ENCODE measurements at regions of chr1 and their contacts with region 1.

Region 1: GRCh38 chr1:8941906-8942305 is 3.8 kb upstream of the CA6 start:
- DNase-seq: no peak
- H3K4me3 Mint-ChIP-seq: peak overlapping the region; percentile 7
- H3K27ac Mint-ChIP-seq: peak overlapping the region; percentile 84
- H3K4me1 Mint-ChIP-seq: peaks cover 92% of the 10 kb centered on the region
- H3K27me3 Mint-ChIP-seq: no peaks in the 10 kb centered on the region

Region 2: GRCh38 chr1:8604041-8604945 is 337.6 kb before region 1 on chr1:
- intact Hi-C with region 1: loop called (anchors 5 kb)
- DNase-seq: peak; percentile 34
- H3K4me3 Mint-ChIP-seq: peak overlapping the region; percentile 61
- H3K27ac Mint-ChIP-seq: peak overlapping the region; percentile 94
- H3K4me1 Mint-ChIP-seq: peaks cover 48% of the 10 kb centered on the region
- H3K27me3 Mint-ChIP-seq: no peaks in the 10 kb centered on the region

Region 3: GRCh38 chr1:8926707-8927694 is 14.9 kb before region 1 on chr1:
- intact Hi-C with region 1: loop called (anchors 2 kb)
- DNase-seq: no peak
- H3K4me3 Mint-ChIP-seq: no peak overlapping the region
- H3K27ac Mint-ChIP-seq: no peak overlapping the region
- H3K4me1 Mint-ChIP-seq: peaks cover 4% of the 10 kb centered on the region
- H3K27me3 Mint-ChIP-seq: no peaks in the 10 kb centered on the region

Region 4: DNA sequence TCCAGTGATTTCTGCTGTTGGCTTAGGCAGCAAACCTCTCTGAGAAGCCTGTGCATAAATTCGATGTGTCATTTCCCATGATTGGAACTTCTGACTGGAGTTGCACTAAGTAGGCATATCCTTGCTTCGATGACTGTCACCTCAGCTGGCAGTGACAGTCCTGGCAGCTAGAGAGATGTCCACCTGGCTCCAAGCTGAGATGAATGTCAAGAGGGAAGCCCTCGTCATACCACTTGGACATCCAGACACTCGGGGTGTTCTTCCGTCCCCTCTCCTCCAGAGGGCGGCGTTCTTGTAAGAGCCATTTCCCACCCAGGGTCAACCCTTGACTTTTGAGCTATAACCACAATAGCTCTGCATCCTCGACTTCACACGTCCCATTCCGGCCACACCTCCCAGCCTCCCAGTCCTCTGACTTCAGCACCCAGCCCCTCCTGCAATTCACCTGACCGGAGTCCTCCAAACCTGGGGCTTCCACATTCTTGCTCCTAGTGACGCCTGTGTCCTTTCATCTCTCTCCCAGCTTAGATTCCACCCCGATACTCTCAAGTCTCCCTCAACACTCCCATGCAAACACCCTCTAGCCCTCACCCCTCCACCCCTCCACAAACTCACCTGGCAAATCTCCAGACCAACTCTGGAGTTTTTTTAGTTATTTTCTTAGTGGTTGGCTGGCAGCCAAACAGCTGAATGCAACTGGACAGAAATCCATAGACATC is 21.1 kb after region 1 on chr1:
- intact Hi-C with region 1: loop called (anchors 1 kb)
- DNase-seq: no peak
- H3K4me3 Mint-ChIP-seq: peak overlapping the region; percentile 49
- H3K27ac Mint-ChIP-seq: peak overlapping the region; percentile 74
- H3K4me1 Mint-ChIP-seq: peaks cover 85% of the 10 kb centered on the region
- H3K27me3 Mint-ChIP-seq: no peaks in the 10 kb centered on the region

Region 5: DNA sequence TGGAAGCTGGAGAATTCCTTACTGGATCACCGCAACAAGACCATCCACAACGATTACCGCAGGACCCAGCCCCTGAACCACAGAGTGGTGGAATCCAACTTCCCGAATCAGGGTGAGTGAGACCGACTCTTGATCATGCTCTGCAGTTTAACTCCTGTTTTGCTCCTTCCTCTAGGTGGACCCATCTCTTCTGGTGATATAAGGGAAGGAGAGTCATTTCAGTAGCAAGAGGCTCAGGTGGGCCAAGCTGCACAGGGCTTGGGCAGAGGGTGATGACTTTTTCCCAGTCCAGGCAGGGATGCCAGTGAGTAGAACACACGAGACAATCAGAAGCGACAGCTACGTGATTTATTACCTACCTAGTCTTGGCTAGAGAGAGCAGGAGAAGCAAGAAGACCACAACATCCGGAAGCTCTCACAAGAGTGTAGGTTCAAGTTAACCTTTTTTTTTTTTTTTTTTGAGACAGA is 29.0 kb after region 1 on chr1:
- intact Hi-C with region 1: loop called (anchors 1 kb)
- DNase-seq: peak; percentile 53
- H3K4me3 Mint-ChIP-seq: peak overlapping the region; percentile 97
- H3K27ac Mint-ChIP-seq: peak overlapping the region; percentile 98
- H3K4me1 Mint-ChIP-seq: peaks cover 57% of the 10 kb centered on the region
- H3K27me3 Mint-ChIP-seq: no peaks in the 10 kb centered on the region

Region 6: GRCh38 chr1:8987881-8988617 is 46.1 kb after region 1 on chr1:
- intact Hi-C with region 1: loop called (anchors 1 kb)
- DNase-seq: peak; percentile 66
- H3K4me3 Mint-ChIP-seq: peak overlapping the region; percentile 53
- H3K27ac Mint-ChIP-seq: peak overlapping the region; percentile 92
- H3K4me1 Mint-ChIP-seq: peaks cover 68% of the 10 kb centered on the region
- H3K27me3 Mint-ChIP-seq: no peaks in the 10 kb centered on the region